CD4-positive, alpha-beta T cell (primary cell): ENCODE measurements at regions of chr16 and their contacts with region 1.

Region 1: GRCh38 chr16:31472709-31473203 is 804 bp downstream of the TGFB1I1 start:
- DNase-seq: peak in 5 of 14 experiments; percentile 38 to 72 (median 51)
- ATAC-seq: peak; percentile 23
- H3K4me3 ChIP-seq: no peak overlapping the region
- H3K4me3 Mint-ChIP-seq: peak overlapping the region; percentile 76
- H3K27ac ChIP-seq: no peak overlapping the region
- H3K27ac Mint-ChIP-seq: no peak overlapping the region
- H3K4me1 ChIP-seq: peaks cover 51% of the 10 kb centered on the region
- H3K4me1 Mint-ChIP-seq: peaks cover 25% of the 10 kb centered on the region
- H3K27me3 ChIP-seq: peaks cover 10 to 24% of the 10 kb centered on the region in 2 experiments
- H3K27me3 Mint-ChIP-seq: peaks cover 13% of the 10 kb centered on the region
- CTCF ChIP-seq: no peak

Region 2: DNA sequence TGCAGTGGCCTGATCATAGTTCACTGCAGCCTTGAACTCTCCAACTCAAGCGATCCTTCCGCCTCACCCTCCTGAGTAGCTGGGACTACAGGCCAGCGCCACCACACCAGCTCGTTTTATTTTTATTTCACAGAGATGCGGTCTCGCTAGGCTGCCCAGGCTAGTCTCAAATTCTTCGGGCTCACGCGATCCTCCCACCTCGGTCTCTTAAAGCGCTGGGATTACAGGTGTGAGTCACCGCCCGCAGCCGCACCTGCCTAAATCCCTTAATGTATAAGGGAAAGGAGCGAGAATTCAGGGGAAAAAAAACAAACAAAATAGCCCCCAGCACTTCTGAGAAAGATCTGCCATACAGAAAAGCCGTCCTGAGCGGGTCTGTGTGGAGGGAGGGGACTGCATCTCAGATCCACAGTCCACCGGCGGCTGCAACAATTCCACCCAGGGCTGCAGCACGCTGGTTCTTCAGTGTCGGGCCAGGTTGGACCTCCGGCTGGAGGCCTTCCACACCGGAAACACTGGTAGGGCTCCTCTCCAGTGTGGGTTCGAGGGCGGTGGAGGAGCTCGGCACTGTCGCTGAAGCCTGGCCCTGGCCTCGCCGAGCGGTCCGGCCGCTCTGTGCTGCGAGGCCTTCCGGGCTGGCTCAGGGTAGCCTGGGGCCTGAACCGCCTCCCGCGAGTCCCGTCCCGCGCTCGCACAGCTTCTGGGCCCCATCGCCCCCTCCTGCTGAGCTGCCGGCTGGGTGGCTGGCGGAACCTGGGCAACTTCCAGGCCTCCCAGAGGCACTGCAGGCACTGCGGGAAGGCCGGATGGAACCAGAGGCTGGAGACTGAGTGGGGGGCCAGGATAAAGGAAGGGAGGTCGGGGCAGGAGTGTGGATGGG is 37.2 kb before region 1 on chr16:
- CTCF ChIA-PET with region 1: no interaction called
- POLR2A ChIA-PET with region 1: no interaction called
- intact Hi-C with region 1: no loop called
- DNase-seq: no peak
- ATAC-seq: no peak
- H3K4me3 ChIP-seq: no peak overlapping the region
- H3K4me3 Mint-ChIP-seq: no peak overlapping the region
- H3K27ac ChIP-seq: no peak overlapping the region
- H3K27ac Mint-ChIP-seq: no peak overlapping the region
- H3K4me1 ChIP-seq: no peaks in the 10 kb centered on the region
- H3K4me1 Mint-ChIP-seq: no peaks in the 10 kb centered on the region
- H3K27me3 ChIP-seq: no peaks in the 10 kb centered on the region
- H3K27me3 Mint-ChIP-seq: no peaks in the 10 kb centered on the region
- CTCF ChIP-seq: no peak

Region 3: DNA sequence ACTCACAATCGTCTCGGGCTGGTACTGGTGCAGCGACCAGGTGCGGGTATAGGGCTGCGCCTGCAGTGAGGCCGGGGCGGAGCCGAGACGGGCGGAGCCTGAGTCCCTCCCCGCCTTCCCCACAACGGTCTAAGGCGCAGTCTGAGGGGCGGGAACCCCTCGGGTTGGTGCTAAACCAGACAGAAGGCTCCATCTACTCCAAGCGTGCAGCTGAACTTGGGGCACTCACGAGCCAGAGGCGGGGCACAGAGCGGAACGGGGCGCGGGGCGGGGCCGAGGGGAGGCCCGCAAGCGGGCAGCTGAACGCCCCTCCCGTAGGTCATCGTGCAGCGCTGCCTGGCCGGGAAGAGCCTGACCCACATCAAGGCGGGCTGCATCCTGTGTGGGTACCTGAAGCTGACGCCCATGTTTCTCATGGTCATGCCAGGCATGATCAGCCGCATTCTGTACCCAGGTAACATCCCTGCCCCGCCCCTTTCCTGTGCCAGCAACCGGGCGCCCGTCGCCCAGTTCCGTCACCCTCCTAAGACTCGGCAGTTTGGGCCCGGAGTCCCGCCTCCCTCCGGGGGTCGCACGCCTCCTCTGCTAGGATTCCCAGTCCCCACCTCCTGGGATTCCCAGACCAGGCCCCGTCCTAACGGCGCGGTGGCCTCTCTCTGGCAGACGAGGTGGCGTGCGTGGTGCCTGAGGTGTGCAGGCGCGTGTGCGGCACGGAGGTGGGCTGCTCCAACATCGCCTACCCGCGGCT is 15.1 kb after region 1 on chr16:
- CTCF ChIA-PET with region 1: no interaction called
- POLR2A ChIA-PET with region 1: interaction called, 32 read pairs
- intact Hi-C with region 1: loop called in 1 of 2 experiments (anchors 1 kb)
- DNase-seq: peak; percentile 60 to 93 (median 74)
- ATAC-seq: peak; percentile 86
- H3K4me3 ChIP-seq: peak overlapping the region; percentile 89
- H3K4me3 Mint-ChIP-seq: peak overlapping the region; percentile 92
- H3K27ac ChIP-seq: peak overlapping the region; percentile 45 to 51
- H3K27ac Mint-ChIP-seq: peak overlapping the region; percentile 91
- H3K4me1 ChIP-seq: peaks cover 27% of the 10 kb centered on the region
- H3K4me1 Mint-ChIP-seq: peaks cover 13% of the 10 kb centered on the region
- H3K27me3 ChIP-seq: no peaks in the 10 kb centered on the region
- H3K27me3 Mint-ChIP-seq: no peaks in the 10 kb centered on the region
- CTCF ChIP-seq: no peak

Region 4: DNA sequence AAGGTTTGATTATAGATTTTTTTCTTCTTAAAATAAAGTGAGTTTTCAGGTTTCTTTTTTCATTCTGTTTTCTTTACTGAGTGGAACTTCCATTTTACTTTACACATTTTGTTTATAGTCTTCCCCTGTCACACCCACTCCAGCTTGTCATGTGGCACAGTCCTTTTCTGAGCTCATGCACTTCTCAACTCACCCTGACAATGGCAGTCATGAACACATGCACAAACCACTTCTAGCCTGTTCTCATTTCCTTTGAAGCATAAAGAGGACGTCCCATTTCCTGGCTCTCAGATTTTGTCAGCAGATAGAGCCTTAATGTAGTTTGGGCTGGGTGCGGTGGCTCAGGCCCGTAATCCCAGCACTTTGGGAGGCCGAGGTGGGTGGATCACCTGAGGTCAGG is 222.9 kb after region 1 on chr16:
- CTCF ChIA-PET with region 1: no interaction called
- POLR2A ChIA-PET with region 1: interaction called, 13 read pairs
- intact Hi-C with region 1: no loop called
- DNase-seq: peak in 12 of 14 experiments; percentile 27 to 93 (median 53)
- ATAC-seq: peak; percentile 94
- H3K4me3 ChIP-seq: no peak overlapping the region
- H3K4me3 Mint-ChIP-seq: no peak overlapping the region
- H3K27ac ChIP-seq: peak overlapping the region in 1 of 2 donors; percentile 50
- H3K27ac Mint-ChIP-seq: no peak overlapping the region
- H3K4me1 ChIP-seq: peaks cover 31% of the 10 kb centered on the region
- H3K4me1 Mint-ChIP-seq: peaks cover 14% of the 10 kb centered on the region
- H3K27me3 ChIP-seq: no peaks in the 10 kb centered on the region
- H3K27me3 Mint-ChIP-seq: no peaks in the 10 kb centered on the region
- CTCF ChIP-seq: no peak

Region 5: DNA sequence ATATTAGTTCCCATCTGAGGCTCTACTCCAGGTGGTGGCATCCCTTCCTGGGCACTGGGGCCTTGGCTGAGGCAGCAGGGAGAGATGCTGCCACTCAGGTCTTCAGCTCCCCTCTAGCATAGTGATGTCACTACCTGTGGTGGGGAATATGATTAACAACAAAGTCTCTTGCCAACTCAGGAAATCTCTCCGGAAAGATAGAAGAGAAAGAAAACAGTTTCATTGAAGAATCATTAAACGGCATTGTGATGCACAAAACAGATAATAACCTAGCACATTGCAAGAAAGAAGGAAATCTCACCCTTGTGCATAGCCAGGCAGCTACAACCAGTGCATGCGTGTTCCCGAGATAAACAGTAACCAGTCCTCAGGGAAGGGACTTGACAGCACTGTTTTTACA is 388.7 kb after region 1 on chr16:
- CTCF ChIA-PET with region 1: no interaction called
- POLR2A ChIA-PET with region 1: no interaction called
- intact Hi-C with region 1: loop called in 1 of 2 experiments (anchors 5 kb)
- DNase-seq: peak in 4 of 14 experiments; percentile 35 to 69 (median 48)
- ATAC-seq: peak; percentile 84
- H3K4me3 ChIP-seq: no peak overlapping the region
- H3K4me3 Mint-ChIP-seq: peak overlapping the region; percentile 8
- H3K27ac ChIP-seq: peak overlapping the region in 1 of 2 donors; percentile 46
- H3K27ac Mint-ChIP-seq: peak overlapping the region; percentile 72
- H3K4me1 ChIP-seq: peaks cover 18% of the 10 kb centered on the region
- H3K4me1 Mint-ChIP-seq: peaks cover 26% of the 10 kb centered on the region
- H3K27me3 ChIP-seq: no peaks in the 10 kb centered on the region
- H3K27me3 Mint-ChIP-seq: no peaks in the 10 kb centered on the region
- CTCF ChIP-seq: no peak